SK-N-SH (cell line): ENCODE measurements at regions of chr11 and their contacts with region 1.

Region 1: DNA sequence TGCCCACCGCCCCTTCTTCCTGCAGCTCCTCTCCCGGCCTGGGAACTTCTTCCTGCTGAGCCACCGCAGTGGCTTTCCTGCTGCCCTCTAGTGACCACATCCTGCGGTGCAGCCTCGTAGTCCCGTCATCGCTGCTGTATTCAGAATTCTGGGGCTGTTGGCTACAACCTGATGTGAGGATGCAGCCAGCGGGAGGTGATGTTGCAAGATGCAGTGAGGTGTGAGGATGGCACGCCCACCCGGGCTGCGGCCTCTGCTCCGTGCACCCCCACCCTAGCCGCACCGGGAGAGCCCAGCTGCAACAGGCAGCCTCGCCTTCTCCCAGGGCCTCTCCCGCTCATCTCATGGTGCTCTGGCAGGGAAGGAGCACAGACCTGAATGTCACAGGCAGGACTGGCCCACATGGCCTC is 10.1 kb downstream of the CHST1 start:
- DNase-seq: peak; percentile 93
- H3K4me3 ChIP-seq: peak overlapping the region in 1 of 2 experiments; percentile 40; a peak in 1 of 4 replicates
- H3K27ac ChIP-seq: no peak overlapping the region
- H3K4me1 ChIP-seq: peaks cover 19 to 26% of the 10 kb centered on the region in 2 experiments; a peak in 3 of 4 replicates
- H3K27me3 ChIP-seq: no peaks in the 10 kb centered on the region
- CTCF ChIP-seq: peak; percentile 90
- EP300 ChIP-seq: no peak
- RAD21 ChIP-seq: peak; percentile 84

Region 2: GRCh38 chr11:45252134-45252855 is 403.1 kb before region 1 on chr11:
- CTCF ChIA-PET with region 1: no interaction called
- POLR2A ChIA-PET with region 1: no interaction called
- DNase-seq: peak; percentile 63
- H3K4me3 ChIP-seq: no peak overlapping the region
- H3K27ac ChIP-seq: no peak overlapping the region
- H3K4me1 ChIP-seq: peaks cover 0 to 3% of the 10 kb centered on the region in 2 experiments; a peak in 1 of 4 replicates
- H3K27me3 ChIP-seq: peaks cover 3% of the 10 kb centered on the region; the same call in 1 of the 2 replicates
- CTCF ChIP-seq: peak; percentile 66
- EP300 ChIP-seq: no peak
- RAD21 ChIP-seq: peak; percentile 37; the same call in 1 of the 2 replicates

Region 3: DNA sequence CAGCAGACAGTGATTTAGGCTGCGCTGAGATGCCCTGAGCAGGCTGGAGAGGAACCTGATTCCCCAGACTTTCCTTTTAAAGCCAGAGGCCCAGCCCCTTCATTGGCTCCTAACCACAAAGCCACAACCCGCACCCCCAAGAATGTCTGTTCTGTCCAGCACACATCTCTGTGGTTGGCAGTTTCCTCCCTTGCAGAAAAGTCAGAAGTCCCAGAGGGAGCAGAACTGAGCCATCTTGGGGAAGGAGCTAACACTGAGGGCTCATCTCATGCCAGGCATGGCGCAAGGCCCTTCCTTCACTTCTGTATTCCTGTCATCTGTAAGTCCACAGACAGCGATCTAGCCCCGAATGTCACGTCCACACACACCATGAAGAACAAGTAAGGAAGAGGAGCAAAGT is 272.1 kb before region 1 on chr11:
- CTCF ChIA-PET with region 1: interaction called, 302 read pairs
- POLR2A ChIA-PET with region 1: no interaction called
- DNase-seq: no peak
- H3K4me3 ChIP-seq: no peak overlapping the region
- H3K27ac ChIP-seq: no peak overlapping the region; a peak in 1 of 4 replicates
- H3K4me1 ChIP-seq: peaks cover 4 to 5% of the 10 kb centered on the region in 2 experiments; a peak in 2 of 4 replicates
- H3K27me3 ChIP-seq: no peaks in the 10 kb centered on the region
- CTCF ChIP-seq: no peak
- EP300 ChIP-seq: no peak; a peak in 1 of 4 replicates
- RAD21 ChIP-seq: no peak

Region 4: GRCh38 chr11:45399166-45399565 is 256.2 kb before region 1 on chr11:
- CTCF ChIA-PET with region 1: interaction called, 28 read pairs
- POLR2A ChIA-PET with region 1: no interaction called
- DNase-seq: no peak
- H3K4me3 ChIP-seq: no peak overlapping the region
- H3K27ac ChIP-seq: no peak overlapping the region
- H3K4me1 ChIP-seq: peaks cover 6 to 19% of the 10 kb centered on the region in 2 experiments; a peak in 3 of 4 replicates
- H3K27me3 ChIP-seq: no peaks in the 10 kb centered on the region
- CTCF ChIP-seq: no peak
- EP300 ChIP-seq: no peak
- RAD21 ChIP-seq: no peak

Region 5: DNA sequence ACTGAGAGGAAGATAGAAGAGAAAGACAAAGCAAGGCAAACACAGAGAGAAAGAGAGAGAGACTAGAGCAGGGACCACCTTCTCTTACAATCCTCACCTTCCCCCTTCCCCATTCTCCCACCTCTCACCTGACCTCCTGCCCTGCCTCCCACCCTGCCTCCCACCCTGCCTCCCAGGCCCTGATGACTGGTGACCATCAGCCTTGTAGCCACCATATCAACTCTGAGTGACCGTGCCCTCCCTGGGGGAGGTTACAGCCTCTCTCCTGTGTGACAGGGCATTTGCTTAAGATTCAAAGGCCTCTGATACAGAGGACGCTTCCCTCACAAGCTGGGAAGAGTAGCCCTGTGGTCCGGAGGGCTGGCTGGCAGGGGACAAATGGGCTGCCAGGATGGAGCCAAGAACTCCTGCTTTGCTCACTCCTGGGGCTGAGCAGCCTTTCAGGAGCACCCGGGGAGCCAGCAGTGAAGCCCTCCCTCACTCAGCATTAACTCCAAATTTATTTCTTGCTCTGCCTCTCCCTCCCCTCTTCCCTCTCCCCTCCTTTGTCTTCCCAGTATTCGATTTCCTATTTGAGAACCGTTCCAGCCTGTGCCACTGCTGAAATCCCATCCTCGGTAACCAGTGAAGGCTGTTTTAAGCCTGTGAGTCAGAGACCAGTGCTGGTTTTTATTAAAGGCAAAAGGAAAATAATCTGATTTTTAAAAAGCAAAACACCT is 244.0 kb before region 1 on chr11:
- CTCF ChIA-PET with region 1: interaction called, 28 read pairs
- POLR2A ChIA-PET with region 1: no interaction called
- DNase-seq: peak; percentile 46
- H3K4me3 ChIP-seq: peak overlapping the region; percentile 17 to 20; a peak in 1 of 4 replicates
- H3K27ac ChIP-seq: peak overlapping the region; percentile 86 to 94
- H3K4me1 ChIP-seq: peaks cover 26 to 38% of the 10 kb centered on the region in 2 experiments
- H3K27me3 ChIP-seq: no peaks in the 10 kb centered on the region
- CTCF ChIP-seq: no peak
- EP300 ChIP-seq: peak in 1 of 2 experiments; percentile 54; a peak in 2 of 4 replicates
- RAD21 ChIP-seq: no peak

Region 6: GRCh38 chr11:45665206-45665932 is 10.0 kb after region 1 on chr11 and contains the start of gene CHST1:
- CTCF ChIA-PET with region 1: interaction called, 64 read pairs
- POLR2A ChIA-PET with region 1: no interaction called
- DNase-seq: peak; percentile 90
- H3K4me3 ChIP-seq: peak within 1 kb of the TSS; percentile 63 to 71
- H3K27ac ChIP-seq: no peak within 1 kb of the TSS
- H3K4me1 ChIP-seq: peaks cover 42 to 43% of the 10 kb centered on the region in 2 experiments; a peak in 3 of 4 replicates
- H3K27me3 ChIP-seq: peaks cover 8% of the 10 kb centered on the region
- CTCF ChIP-seq: no peak
- EP300 ChIP-seq: no peak
- RAD21 ChIP-seq: no peak
- polyA plus RNA-seq, gene CHST1: 2.7 and 4.9 TPM in 2 replicates